ENCODE measurements at regions of chr2 and their contacts with region 1.

Region 1: DNA sequence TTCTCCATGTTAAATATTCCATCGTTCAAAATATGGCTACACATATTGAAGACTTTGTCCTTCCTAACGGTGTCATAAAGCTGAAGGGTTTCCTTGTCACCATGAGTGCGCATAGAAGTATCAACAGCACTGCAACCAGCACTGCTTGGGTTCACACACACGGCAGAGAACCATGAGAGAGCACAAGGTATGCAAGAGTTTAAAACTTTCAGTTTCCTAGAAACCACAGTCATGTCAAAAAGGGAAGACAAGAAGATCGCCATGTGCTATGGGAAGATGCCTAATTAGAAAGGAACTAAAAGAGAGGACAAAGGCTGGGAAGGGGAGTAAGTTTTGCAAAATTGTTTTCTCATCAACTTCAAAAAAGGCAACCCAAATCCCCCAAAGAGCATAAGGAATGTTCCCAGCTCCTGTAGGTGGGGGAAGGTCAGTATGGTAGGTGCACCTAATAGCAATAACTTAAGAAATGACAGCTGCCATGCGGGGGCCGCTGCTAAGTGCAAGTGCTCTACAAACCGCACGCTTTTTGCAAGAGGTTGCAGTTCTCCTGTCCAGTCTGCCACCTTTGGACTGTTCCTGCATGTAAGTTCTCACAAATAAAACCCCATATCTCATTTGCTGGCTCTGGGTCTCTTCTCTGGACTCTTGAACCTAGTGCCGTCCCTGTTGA is 136.8 kb downstream of the TMEM163 start:
- DNase-seq: no peak
- H3K4me3 Mint-ChIP-seq: no peak overlapping the region
- H3K27ac Mint-ChIP-seq: peak overlapping the region; percentile 78
- H3K4me1 Mint-ChIP-seq: peaks cover 44% of the 10 kb centered on the region
- H3K27me3 Mint-ChIP-seq: peaks cover 3% of the 10 kb centered on the region

Region 2: DNA sequence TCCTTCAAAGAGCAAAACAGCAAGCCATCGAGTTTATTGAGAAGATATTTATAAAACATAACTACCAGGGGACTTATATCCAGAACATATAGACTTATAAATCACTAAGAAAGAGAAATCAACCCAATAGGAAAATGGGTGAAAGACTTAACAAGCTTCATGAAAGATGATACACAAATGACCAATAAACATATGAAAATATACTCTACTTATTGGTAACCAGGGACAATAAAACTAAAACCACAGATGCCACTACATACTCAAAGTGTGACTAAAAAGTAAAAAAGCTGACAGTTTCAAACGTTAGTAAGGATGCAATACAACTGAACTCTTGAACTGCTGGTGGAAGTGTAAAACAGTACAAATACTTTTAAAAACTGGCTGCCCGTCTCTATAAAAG is 17.5 kb before region 1 on chr2:
- CTCF ChIA-PET with region 1: interaction called, 3 read pairs
- POLR2A ChIA-PET with region 1: interaction called, 15 read pairs
- DNase-seq: no peak
- H3K4me3 Mint-ChIP-seq: no peak overlapping the region
- H3K27ac Mint-ChIP-seq: no peak overlapping the region
- H3K4me1 Mint-ChIP-seq: peaks cover 10% of the 10 kb centered on the region
- H3K27me3 Mint-ChIP-seq: peaks cover 30% of the 10 kb centered on the region

Region 3: GRCh38 chr2:134609924-134610513 is 28.0 kb after region 1 on chr2:
- CTCF ChIA-PET with region 1: no interaction called
- POLR2A ChIA-PET with region 1: no interaction called
- DNase-seq: no peak
- H3K4me3 Mint-ChIP-seq: no peak overlapping the region
- H3K27ac Mint-ChIP-seq: no peak overlapping the region
- H3K4me1 Mint-ChIP-seq: no peaks in the 10 kb centered on the region
- H3K27me3 Mint-ChIP-seq: peaks cover 12% of the 10 kb centered on the region

Measured in activated CD4-positive, alpha-beta memory T cell treated with anti-CD3 and anti-CD28 coated beads, Interleukin-2, amount 10 ng/mL, durations not matched to agents 7 days and 5 days (primary cell).